Gastrocnemius medialis (tissue), 4 donors: ENCODE measurements at regions of chr11 and their contacts with region 1.

Region 1: GRCh38 chr11:19868281-19868821 is 155.7 kb downstream of the NAV2 start:
- DNase-seq: peak; percentile 90 to 93
- ATAC-seq: peak; percentile 98 to 99
- H3K4me3 ChIP-seq: no peak overlapping the region
- H3K27ac ChIP-seq: peak overlapping the region; percentile 70 to 79 (median 74)
- H3K4me1 ChIP-seq: peaks cover 15 to 29% of the 10 kb centered on the region in 2 donors
- H3K27me3 ChIP-seq: no peaks in the 10 kb centered on the region
- CTCF ChIP-seq: no peak
- POLR2A ChIP-seq: no peak

Region 2: DNA sequence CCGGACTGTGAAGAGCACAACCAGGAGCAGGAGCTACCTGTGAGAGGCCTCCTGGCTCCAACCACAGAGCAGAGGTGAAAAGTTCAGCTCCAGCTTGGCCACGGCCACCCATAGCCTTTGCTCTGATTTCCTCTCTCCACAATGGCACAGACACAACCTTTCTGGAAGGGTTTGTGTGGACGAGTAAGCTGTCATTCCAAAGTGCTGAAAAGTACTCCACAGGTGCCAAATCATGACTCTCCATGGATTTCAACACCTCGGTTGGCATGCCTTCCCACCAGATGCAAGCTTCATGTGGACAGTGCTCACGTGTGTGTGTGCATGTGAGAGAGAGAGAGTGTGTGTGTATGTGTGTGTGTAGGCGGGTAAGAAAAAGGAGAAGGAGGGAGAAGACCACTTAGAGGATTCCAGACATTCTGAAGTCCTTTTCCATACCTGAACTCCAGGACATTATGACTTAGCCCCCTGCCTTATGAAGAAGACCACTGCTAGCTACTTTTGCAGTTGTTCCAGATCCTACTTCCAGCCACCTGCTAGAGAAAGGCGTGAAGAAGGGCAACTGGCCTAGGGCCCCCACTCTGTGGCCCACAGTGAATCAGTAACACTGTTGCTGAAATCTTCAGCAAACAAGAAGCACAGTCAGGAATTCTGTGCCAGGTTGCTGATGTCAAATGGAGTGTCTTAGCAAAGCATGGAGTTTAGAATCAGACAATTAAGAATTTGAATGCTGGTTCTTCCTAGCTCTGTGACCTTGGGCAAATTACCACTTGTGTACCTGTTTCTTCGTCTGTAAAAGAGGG is 169.7 kb before region 1 on chr11:
- in situ Hi-C with region 1: no loop called
- intact Hi-C with region 1: loop called (anchors 2 kb)
- DNase-seq: peak; percentile 88 to 94
- ATAC-seq: peak; percentile 94 to 95
- H3K4me3 ChIP-seq: no peak overlapping the region
- H3K27ac ChIP-seq: peak overlapping the region; percentile 53 to 72 (median 70)
- H3K4me1 ChIP-seq: peaks cover 39 to 40% of the 10 kb centered on the region in 2 donors
- H3K27me3 ChIP-seq: no peaks in the 10 kb centered on the region
- CTCF ChIP-seq: no peak
- POLR2A ChIP-seq: no peak

Region 3: DNA sequence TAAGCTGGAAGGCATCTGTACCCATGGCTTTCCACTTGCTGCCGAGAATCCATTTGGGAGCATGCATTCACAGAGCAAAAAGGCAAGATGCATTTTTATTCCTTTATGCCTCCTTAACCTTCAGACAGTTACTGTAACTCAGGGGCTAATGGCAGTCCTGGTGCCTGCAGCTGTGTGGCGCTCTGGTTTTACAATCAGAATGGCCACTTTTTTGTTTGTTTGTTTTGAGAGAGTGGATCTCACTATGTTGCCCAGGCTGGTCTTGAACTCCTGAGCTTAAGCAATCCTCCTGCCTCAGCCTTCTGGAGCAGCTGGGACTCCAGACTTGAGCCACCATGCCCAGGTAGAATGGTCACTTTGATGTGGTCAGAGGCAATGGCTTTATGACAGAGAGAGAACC is 53.9 kb before region 1 on chr11:
- in situ Hi-C with region 1: no loop called
- intact Hi-C with region 1: loop called (anchors 1 kb)
- DNase-seq: no peak
- ATAC-seq: no peak
- H3K4me3 ChIP-seq: no peak overlapping the region
- H3K27ac ChIP-seq: peak overlapping the region in 2 of 4 donors; percentile 74 to 76
- H3K4me1 ChIP-seq: peaks cover 57 to 65% of the 10 kb centered on the region in 2 donors
- H3K27me3 ChIP-seq: no peaks in the 10 kb centered on the region
- CTCF ChIP-seq: peak in 1 of 5 experiments; percentile 8
- POLR2A ChIP-seq: no peak

Region 4: GRCh38 chr11:19849107-19849789 is 19.1 kb before region 1 on chr11:
- in situ Hi-C with region 1: no loop called
- intact Hi-C with region 1: loop called (anchors 1 kb)
- DNase-seq: peak; percentile 82 to 95
- ATAC-seq: peak; percentile 98
- H3K4me3 ChIP-seq: no peak overlapping the region
- H3K27ac ChIP-seq: peak overlapping the region; percentile 71 to 76 (median 74)
- H3K4me1 ChIP-seq: peaks cover 23 to 40% of the 10 kb centered on the region in 2 donors
- H3K27me3 ChIP-seq: no peaks in the 10 kb centered on the region
- CTCF ChIP-seq: no peak
- POLR2A ChIP-seq: no peak

Region 5: GRCh38 chr11:20177136-20177535 is 308.8 kb after region 1 on chr11:
- in situ Hi-C with region 1: no loop called
- intact Hi-C with region 1: no loop called
- DNase-seq: no peak
- ATAC-seq: no peak
- H3K4me3 ChIP-seq: no peak overlapping the region
- H3K27ac ChIP-seq: no peak overlapping the region
- H3K4me1 ChIP-seq: no peaks in the 10 kb centered on the region
- H3K27me3 ChIP-seq: no peaks in the 10 kb centered on the region
- CTCF ChIP-seq: no peak
- POLR2A ChIP-seq: no peak